ENCODE measurements at regions of chr6 and their contacts with region 1.

Region 1: DNA sequence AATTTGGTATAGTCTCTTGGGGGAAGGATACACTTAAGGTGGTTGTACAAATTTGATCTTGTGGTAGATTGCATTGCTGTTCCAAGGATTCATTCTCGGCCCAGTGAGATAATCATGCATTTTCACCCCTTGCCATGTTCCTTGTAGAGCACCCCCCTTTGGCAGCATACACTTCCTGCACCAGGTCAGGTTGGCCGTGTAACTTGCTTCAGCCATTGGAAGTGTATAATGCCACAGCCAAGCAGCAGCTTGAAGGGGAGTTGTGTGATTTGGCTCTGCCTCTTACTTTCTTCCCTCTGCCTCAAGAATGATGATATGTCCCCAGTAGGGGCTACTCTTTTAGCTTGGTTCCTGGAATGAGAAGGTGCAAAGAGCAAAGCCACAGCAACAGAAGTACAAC is 21.9 kb downstream of the CCN2 start:
- DNase-seq: no peak
- H3K4me3 ChIP-seq: no peak overlapping the region
- H3K27ac ChIP-seq: no peak overlapping the region
- H3K27me3 ChIP-seq: no peaks in the 10 kb centered on the region
- CTCF ChIP-seq: 0 out of 2 replicates have a peak, but pooled peaks have one; percentile 10

Region 2: GRCh38 chr6:132218059-132218696 is 288.9 kb after region 1 on chr6:
- CTCF ChIA-PET with region 1: interaction called, 43 read pairs
- POLR2A ChIA-PET with region 1: no interaction called
- DNase-seq: peak; percentile 23
- H3K4me3 ChIP-seq: no peak overlapping the region
- H3K27ac ChIP-seq: no peak overlapping the region
- H3K27me3 ChIP-seq: no peaks in the 10 kb centered on the region
- CTCF ChIP-seq: peak; percentile 59